ENCODE measurements at regions of chr20 and their contacts with region 1.

Region 1: GRCh38 chr20:53757472-53757913 is 163.9 kb upstream of the ZNF217 start:
- DNase-seq: no peak
- ATAC-seq: no peak
- H3K4me3 ChIP-seq: no peak overlapping the region
- H3K27ac ChIP-seq: no peak overlapping the region
- H3K4me1 ChIP-seq: peaks cover 28% of the 10 kb centered on the region
- H3K27me3 ChIP-seq: no peaks in the 10 kb centered on the region
- CTCF ChIP-seq: no peak
- EP300 ChIP-seq: no peak
- POLR2A ChIP-seq: no peak
- RAD21 ChIP-seq: no peak

Region 2: GRCh38 chr20:53676519-53676822 is 81.0 kb before region 1 on chr20:
- CTCF ChIA-PET with region 1: no interaction called
- POLR2A ChIA-PET with region 1: no interaction called
- RAD21 ChIA-PET with region 1: no interaction called
- SMC1A ChIA-PET with region 1: no interaction called
- in situ Hi-C with region 1: no loop called
- intact Hi-C with region 1: no loop called
- DNase-seq: no peak
- ATAC-seq: no peak
- H3K4me3 ChIP-seq: no peak overlapping the region
- H3K27ac ChIP-seq: no peak overlapping the region
- H3K4me1 ChIP-seq: peaks cover 6% of the 10 kb centered on the region; the same call in 1 of the 2 replicates
- H3K27me3 ChIP-seq: no peaks in the 10 kb centered on the region
- CTCF ChIP-seq: no peak
- EP300 ChIP-seq: no peak
- POLR2A ChIP-seq: no peak
- RAD21 ChIP-seq: no peak

Region 3: GRCh38 chr20:53786445-53787267 is 29.2 kb after region 1 on chr20:
- CTCF ChIA-PET with region 1: no interaction called
- POLR2A ChIA-PET with region 1: no interaction called
- RAD21 ChIA-PET with region 1: interaction called, 5 read pairs
- SMC1A ChIA-PET with region 1: interaction called, 12 read pairs
- in situ Hi-C with region 1: no loop called
- intact Hi-C with region 1: no loop called
- DNase-seq: no peak
- ATAC-seq: no peak; the same call in 2 of the 3 replicates
- H3K4me3 ChIP-seq: no peak overlapping the region
- H3K27ac ChIP-seq: no peak overlapping the region
- H3K4me1 ChIP-seq: peaks cover 12% of the 10 kb centered on the region
- H3K27me3 ChIP-seq: no peaks in the 10 kb centered on the region
- CTCF ChIP-seq: no peak
- EP300 ChIP-seq: no peak
- POLR2A ChIP-seq: no peak
- RAD21 ChIP-seq: no peak

Measured in GM12878 (cell line).